AG04449 (cell line): ENCODE measurements at regions of chr2 and their contacts with region 1.

Region 1: DNA sequence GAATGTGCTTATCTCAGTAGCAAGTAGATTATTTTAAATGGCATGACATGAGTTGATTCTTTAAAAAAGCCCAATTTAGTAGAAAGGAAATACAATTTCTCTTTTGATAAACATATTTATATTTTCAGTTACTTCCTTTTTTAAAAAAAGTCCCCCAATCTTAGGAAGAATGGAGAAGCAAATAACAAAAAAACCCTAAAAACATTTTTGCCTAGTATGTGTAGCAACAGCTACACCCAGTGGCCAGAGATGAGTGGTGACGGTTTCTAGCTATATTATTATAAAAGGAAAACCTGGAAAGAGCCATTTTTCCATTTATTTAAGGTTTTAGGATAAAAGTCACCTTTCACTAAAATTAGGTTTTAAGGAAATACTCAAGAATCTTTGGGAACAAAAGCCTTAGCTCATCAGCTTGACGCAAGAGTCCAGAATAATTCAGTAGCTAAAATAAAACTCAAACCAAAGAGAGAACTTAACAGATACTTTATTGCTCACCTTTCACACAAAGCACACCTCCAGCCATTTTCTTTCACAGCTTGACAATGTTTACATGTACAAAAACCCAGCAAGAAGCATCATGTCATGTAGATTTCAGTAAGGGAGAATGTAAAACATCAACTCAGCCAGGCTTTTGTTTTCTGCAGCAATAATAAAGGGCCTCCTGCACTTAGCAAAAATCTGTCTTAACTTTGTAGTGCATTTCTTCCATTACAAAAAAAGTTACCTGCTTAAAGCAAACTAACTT is 15.7 kb downstream of the FAM98A start:
- DNase-seq: no peak
- H3K4me3 ChIP-seq: no peak overlapping the region
- CTCF ChIP-seq: peak; percentile 55

Region 2: GRCh38 chr2:33412920-33413319 is 170.4 kb before region 1 on chr2:
- CTCF ChIA-PET with region 1: interaction called, 33 read pairs
- POLR2A ChIA-PET with region 1: no interaction called
- DNase-seq: no peak
- H3K4me3 ChIP-seq: no peak overlapping the region
- CTCF ChIP-seq: peak; percentile 38

Region 3: DNA sequence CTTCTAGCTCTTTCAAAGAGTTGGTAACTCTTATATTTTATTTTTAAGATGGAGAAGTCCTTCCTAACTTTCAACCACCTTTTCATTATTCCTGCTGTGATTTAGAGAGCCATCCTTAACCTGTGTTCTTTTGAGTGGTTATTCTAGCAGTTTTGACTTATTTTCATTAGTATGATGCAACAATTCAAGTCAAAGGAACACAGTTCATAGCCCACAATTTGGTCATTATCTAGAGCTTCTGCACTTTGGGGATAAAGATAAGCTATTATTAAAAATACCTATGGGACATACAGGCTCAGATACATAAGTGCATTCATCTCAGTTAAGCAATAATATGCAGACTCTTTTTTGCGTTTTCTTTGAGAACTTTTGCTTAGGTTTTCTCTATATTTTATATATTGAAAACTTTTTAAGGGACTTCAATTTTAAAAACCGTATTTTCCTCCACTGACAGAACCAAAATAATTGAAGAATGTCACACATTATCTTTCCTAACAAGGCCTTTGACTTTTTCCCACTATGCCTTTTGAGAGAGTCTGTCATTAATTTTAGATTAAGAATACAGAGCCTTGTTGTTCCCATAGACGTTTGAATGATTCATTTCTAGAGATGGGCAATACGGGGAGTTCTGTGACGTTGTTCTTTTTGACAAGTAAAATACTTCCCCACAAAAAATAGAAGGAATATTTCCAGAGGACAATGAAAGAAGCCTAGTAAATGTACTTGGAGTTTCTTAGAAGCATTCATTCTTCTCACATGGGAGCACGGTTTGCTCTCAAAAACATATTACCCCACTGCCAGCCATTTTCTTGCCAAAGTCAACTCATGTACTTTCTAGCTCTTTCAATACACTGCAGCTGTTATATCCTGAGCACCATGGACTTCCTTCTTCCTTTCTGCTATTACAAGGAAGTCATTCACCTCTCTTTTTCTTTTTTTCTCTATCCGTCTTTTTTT is 149.8 kb before region 1 on chr2:
- CTCF ChIA-PET with region 1: interaction called, 11 read pairs
- POLR2A ChIA-PET with region 1: no interaction called
- DNase-seq: no peak
- H3K4me3 ChIP-seq: no peak overlapping the region
- CTCF ChIP-seq: no peak

Region 4: GRCh38 chr2:33475224-33476130 is 107.9 kb before region 1 on chr2:
- CTCF ChIA-PET with region 1: interaction called, 25 read pairs
- POLR2A ChIA-PET with region 1: no interaction called
- DNase-seq: peak; percentile 23
- H3K4me3 ChIP-seq: peak overlapping the region; percentile 75
- CTCF ChIP-seq: peak; percentile 91

Region 5: GRCh38 chr2:34936089-34936488 is 1352.7 kb after region 1 on chr2:
- CTCF ChIA-PET with region 1: no interaction called
- POLR2A ChIA-PET with region 1: no interaction called
- DNase-seq: no peak
- H3K4me3 ChIP-seq: no peak overlapping the region
- CTCF ChIP-seq: no peak